CD8-positive, alpha-beta T cell (primary cell): ENCODE measurements at regions of chr5 and their contacts with region 1.

Region 1: DNA sequence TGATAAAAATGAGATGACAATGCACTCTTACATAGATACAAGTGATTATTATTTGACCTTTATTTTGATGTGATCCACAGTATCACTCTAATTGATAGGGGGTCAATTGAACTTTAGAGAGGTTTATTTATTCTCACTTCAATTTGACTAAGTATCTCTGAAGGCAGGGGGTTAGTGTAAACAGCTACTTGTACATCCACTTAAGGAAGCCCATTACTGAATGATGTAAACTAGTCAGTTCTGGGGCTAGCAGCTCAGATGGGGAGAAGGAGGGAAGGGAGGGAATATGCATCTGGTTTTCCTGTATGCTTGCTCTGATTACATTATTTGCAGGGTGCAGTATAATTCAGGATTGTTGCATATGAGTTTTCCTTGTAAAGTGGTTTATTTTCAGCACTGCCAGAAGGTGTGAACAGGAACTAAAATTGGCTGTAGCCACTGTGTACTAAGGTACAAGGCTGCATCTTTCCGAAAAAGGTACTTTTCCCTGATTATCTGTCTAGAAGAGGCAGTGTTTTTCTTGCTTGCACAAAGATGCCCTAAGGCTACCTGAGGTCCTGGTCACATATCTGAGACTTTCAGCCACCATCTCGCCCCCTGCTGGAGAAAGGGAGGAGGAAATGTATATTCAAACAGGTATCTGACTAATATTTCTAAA is 51.2 kb downstream of the MRPS27 start:
- DNase-seq: peak in 8 of 9 experiments; percentile 3 to 64 (median 37)
- ATAC-seq: peak; percentile 29
- H3K4me3 ChIP-seq: no peak overlapping the region
- H3K4me3 Mint-ChIP-seq: no peak overlapping the region
- H3K27ac ChIP-seq: no peak overlapping the region
- H3K27ac Mint-ChIP-seq: no peak overlapping the region
- H3K4me1 ChIP-seq: no peaks in the 10 kb centered on the region
- H3K4me1 Mint-ChIP-seq: peaks cover 4% of the 10 kb centered on the region
- H3K27me3 ChIP-seq: no peaks in the 10 kb centered on the region
- H3K27me3 Mint-ChIP-seq: no peaks in the 10 kb centered on the region
- CTCF ChIP-seq: peak; percentile 77

Region 2: GRCh38 chr5:72138943-72139521 is 129.8 kb before region 1 on chr5:
- CTCF ChIA-PET with region 1: no interaction called
- POLR2A ChIA-PET with region 1: no interaction called
- intact Hi-C with region 1: loop called (anchors 1 to 5 kb)
- DNase-seq: peak in 2 of 9 experiments; percentile 19 to 38
- ATAC-seq: no peak
- H3K4me3 ChIP-seq: no peak overlapping the region
- H3K4me3 Mint-ChIP-seq: no peak overlapping the region
- H3K27ac ChIP-seq: no peak overlapping the region
- H3K27ac Mint-ChIP-seq: no peak overlapping the region
- H3K4me1 ChIP-seq: no peaks in the 10 kb centered on the region
- H3K4me1 Mint-ChIP-seq: no peaks in the 10 kb centered on the region
- H3K27me3 ChIP-seq: peaks cover 0 to 3% of the 10 kb centered on the region in 2 experiments
- H3K27me3 Mint-ChIP-seq: peaks cover 24% of the 10 kb centered on the region
- CTCF ChIP-seq: no peak

Region 3: GRCh38 chr5:72234265-72234700 is 34.6 kb before region 1 on chr5:
- CTCF ChIA-PET with region 1: interaction called, 4 read pairs
- POLR2A ChIA-PET with region 1: no interaction called
- intact Hi-C with region 1: loop called in 1 of 2 experiments (anchors 2 kb)
- DNase-seq: peak in 5 of 9 experiments; percentile 21 to 89 (median 29)
- ATAC-seq: peak; percentile 86
- H3K4me3 ChIP-seq: no peak overlapping the region
- H3K4me3 Mint-ChIP-seq: no peak overlapping the region
- H3K27ac ChIP-seq: no peak overlapping the region
- H3K27ac Mint-ChIP-seq: no peak overlapping the region
- H3K4me1 ChIP-seq: peaks cover 23% of the 10 kb centered on the region
- H3K4me1 Mint-ChIP-seq: peaks cover 52% of the 10 kb centered on the region
- H3K27me3 ChIP-seq: no peaks in the 10 kb centered on the region
- H3K27me3 Mint-ChIP-seq: no peaks in the 10 kb centered on the region
- CTCF ChIP-seq: no peak